Heart right ventricle (tissue), 16 donors: ENCODE measurements at regions of chr13 and their contacts with region 1.

Region 1: DNA sequence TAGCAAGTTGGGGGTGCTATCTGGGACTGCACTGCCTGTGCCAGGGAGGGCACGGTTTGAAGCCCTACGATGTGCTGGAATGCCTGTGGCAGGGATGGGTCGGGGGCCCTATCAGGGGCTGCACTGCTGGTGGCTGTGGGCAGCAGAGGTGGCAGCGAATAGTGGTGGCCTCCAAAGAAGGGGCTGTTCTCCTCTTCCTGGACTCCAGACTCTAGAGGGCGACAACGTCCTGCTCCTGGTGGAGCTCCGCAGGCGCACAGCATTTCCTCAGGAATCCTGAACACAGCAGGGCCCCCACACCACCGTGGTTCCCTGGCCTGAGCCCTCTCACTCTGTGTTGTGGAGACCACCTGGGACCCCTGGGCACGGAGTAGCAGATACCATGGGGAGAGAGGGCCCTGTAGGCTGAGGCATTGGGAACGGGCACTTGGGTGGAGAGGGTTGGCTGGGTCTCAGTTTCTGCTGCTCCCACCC is 145.6 kb downstream of the TNFRSF19 start:
- DNase-seq: no peak
- ATAC-seq: peak in 6 of 8 donors; percentile 29 to 64 (median 44)
- H3K4me3 ChIP-seq: no peak overlapping the region
- H3K27ac ChIP-seq: no peak overlapping the region
- H3K4me1 ChIP-seq: no peaks in the 10 kb centered on the region
- H3K27me3 ChIP-seq: no peaks in the 10 kb centered on the region
- CTCF ChIP-seq: peak in 7 of 9 donors; percentile 13 to 39 (median 27)

Region 2: GRCh38 chr13:22644941-22645340 is 1070.9 kb before region 1 on chr13:
- intact Hi-C with region 1: no loop called
- DNase-seq: no peak
- ATAC-seq: no peak
- H3K4me3 ChIP-seq: no peak overlapping the region
- H3K27ac ChIP-seq: no peak overlapping the region
- H3K4me1 ChIP-seq: no peaks in the 10 kb centered on the region
- H3K27me3 ChIP-seq: no peaks in the 10 kb centered on the region
- CTCF ChIP-seq: no peak

Region 3: GRCh38 chr13:23755003-23755402 is 39.2 kb after region 1 on chr13:
- intact Hi-C with region 1: loop called in 1 of 10 experiments (anchors 5 kb)
- DNase-seq: no peak
- ATAC-seq: no peak
- H3K4me3 ChIP-seq: no peak overlapping the region
- H3K27ac ChIP-seq: no peak overlapping the region
- H3K4me1 ChIP-seq: peaks cover 0 to 34% (median 10%) of the 10 kb centered on the region in 9 donors
- H3K27me3 ChIP-seq: no peaks in the 10 kb centered on the region
- CTCF ChIP-seq: no peak

Region 4: DNA sequence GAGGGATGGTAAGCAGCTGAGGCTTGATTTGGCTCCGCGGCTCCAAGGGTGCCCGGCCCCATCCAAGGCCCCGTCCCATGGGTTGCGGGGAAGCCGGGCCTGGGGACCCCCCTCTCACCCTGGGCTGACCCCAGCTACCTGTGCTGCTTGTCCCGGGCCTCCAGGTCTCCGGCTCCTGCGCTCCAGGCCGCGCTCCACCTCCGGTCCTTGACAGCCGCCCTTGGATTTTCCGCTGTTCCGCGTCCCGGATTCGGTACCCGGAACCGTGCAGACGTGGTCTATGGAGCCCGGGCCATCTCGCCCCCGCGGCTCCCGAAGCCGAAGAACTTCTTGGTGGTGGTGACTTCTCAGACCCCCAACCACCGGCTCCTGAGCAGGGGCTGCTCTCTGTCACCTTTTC is 229.8 kb after region 1 on chr13:
- intact Hi-C with region 1: no loop called
- DNase-seq: no peak
- ATAC-seq: peak in 2 of 8 donors; percentile 31
- H3K4me3 ChIP-seq: peak overlapping the region in 6 of 10 donors; percentile 5 to 34 (median 30)
- H3K27ac ChIP-seq: no peak overlapping the region
- H3K4me1 ChIP-seq: no peaks in the 10 kb centered on the region
- H3K27me3 ChIP-seq: peaks cover 0 to 20% (median 7%) of the 10 kb centered on the region in 7 donors
- CTCF ChIP-seq: no peak